ENCODE measurements at regions of chr19 and their contacts with region 1.

Region 1: DNA sequence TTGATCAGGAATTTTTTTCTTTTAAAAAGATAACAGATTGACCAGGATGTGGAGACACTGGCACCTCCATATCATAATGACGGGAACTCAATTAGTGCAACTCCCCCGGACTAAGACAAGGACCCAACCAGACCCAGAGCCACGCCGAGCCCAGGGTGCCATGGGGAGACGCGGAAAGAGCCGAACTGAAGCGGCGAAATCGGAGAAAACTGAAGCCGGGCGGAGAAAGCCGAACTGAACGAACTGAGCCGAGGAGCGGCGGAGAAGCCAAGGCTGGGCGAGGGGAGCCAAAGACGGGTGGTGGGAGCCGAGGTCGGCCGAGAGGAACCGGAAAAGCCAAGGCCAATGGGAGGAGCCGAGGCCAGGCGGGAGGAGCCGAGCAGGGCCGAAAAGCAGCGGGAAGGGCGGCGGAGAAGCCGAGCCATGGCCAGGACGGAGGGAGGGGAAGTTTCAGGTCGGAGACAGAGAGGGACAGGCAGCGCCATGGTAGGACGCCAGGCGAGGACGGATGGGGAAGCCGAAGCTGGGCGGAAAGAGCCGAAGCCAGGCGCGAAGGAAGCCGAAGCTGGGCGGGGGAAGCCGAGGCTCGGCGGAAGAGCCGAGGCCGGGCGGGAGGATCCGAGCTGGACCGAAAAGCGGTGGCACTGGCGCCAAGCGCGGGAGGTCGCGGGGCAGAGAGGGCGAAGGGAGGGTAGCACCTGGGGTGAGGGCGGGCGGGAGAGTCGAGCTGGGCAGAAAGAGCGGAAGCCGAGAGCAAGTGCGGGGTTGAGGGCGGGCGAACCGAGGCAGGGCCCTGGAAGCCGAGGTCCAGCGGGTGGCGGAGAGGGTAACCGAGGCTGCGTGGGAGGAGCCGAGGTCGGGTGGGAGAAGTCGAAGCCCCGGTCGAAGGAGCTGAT is 29.4 kb downstream of the ZNF557 start:
- DNase-seq: peak; percentile 92
- H3K4me3 ChIP-seq: peak overlapping the region; percentile 40 to 75 (median 61)
- H3K27ac ChIP-seq: peak overlapping the region; percentile 66
- H3K4me1 ChIP-seq: peaks cover 3% of the 10 kb centered on the region
- H3K27me3 ChIP-seq: no peaks in the 10 kb centered on the region
- CTCF ChIP-seq: no peak
- POLR2A ChIP-seq: peak; percentile 56

Region 2: GRCh38 chr19:7004313-7004931 is 94.5 kb before region 1 on chr19:
- CTCF ChIA-PET with region 1: no interaction called
- POLR2A ChIA-PET with region 1: no interaction called
- dilution Hi-C with region 1: no loop called
- intact Hi-C with region 1: no loop called
- DNase-seq: peak; percentile 36
- H3K4me3 ChIP-seq: no peak overlapping the region
- H3K27ac ChIP-seq: no peak overlapping the region
- H3K4me1 ChIP-seq: no peaks in the 10 kb centered on the region
- H3K27me3 ChIP-seq: no peaks in the 10 kb centered on the region
- CTCF ChIP-seq: peak; percentile 49 to 61
- POLR2A ChIP-seq: no peak

Region 3: GRCh38 chr19:7069042-7069903 is 29.7 kb before region 1 on chr19 and contains the start of gene ZNF557:
- CTCF ChIA-PET with region 1: interaction called, 7 read pairs
- POLR2A ChIA-PET with region 1: interaction called, 15 read pairs
- dilution Hi-C with region 1: no loop called
- intact Hi-C with region 1: loop called (anchors 1 kb)
- DNase-seq: peak; percentile 97
- H3K4me3 ChIP-seq: peak within 1 kb of the TSS; percentile 72 to 94 (median 79)
- H3K27ac ChIP-seq: peak within 1 kb of the TSS; percentile 46
- H3K4me1 ChIP-seq: peaks cover 7% of the 10 kb centered on the region
- H3K27me3 ChIP-seq: no peaks in the 10 kb centered on the region
- CTCF ChIP-seq: no peak
- POLR2A ChIP-seq: peak; percentile 63
- total RNA-seq, gene ZNF557: 8.0 and 9.1 TPM in 2 replicates

Region 4: DNA sequence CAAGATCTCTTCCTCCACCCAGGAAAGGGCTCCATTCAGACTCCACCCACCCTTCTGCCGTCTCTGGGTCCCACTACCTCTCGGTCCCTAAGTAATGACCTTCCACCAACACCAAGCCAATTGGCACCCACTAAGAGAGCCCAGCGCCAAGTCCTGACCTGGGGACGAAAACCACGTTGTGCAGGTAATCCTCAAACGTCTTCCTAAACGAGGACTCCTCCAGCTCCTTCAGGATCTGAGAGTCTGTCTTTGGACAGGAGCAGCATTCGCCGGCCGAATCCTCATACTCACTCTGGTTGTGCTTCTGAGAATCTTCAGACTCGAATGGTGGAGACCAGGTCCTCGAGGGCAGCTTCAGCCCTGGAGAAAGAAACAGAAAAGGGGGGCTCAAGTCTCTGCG is 53.6 kb after region 1 on chr19:
- CTCF ChIA-PET with region 1: interaction called, 15 read pairs
- POLR2A ChIA-PET with region 1: interaction called, 4 read pairs
- dilution Hi-C with region 1: no loop called
- intact Hi-C with region 1: loop called (anchors 1 kb)
- DNase-seq: no peak
- H3K4me3 ChIP-seq: no peak overlapping the region
- H3K27ac ChIP-seq: no peak overlapping the region
- H3K4me1 ChIP-seq: peaks cover 3% of the 10 kb centered on the region
- H3K27me3 ChIP-seq: no peaks in the 10 kb centered on the region
- CTCF ChIP-seq: no peak
- POLR2A ChIP-seq: no peak

Region 5: DNA sequence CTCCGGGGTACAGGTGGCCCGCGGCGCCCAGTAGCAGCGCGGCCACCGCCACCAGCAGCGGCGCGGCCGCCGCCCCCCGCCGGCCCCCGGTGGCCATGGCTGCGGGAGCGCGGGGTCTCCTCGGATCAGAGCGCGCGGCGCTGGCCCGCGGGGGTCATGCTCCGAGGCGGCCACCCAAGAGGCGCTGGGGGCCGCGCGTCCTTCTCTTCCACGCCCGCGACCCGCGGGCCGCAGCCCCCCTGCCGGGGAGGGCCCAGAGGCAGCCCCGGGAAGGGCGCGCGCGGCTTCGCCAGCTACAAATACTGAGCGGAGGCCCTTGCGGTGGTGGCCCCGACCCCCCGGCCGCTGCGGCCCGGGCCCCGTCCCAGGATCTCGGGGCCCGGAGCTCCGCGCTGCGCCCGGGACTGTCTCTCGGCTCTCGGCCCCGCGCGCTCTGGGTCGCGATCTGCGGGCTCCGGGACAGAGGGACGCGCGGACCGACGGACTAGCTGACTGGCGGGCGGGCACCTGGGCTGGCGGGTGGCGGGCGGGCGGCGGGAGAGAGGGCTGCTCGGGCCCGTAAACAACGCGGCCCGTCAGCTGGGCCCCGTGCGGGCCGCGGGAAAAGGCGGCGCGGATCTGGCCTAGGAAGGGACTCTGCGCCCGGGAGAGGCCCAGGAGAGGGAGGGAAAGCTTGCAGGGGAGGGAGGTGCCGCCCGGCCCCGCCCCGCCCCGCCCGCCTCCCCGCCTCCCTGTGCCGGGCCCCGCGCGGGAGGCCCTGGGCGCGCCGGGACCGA is 195.0 kb after region 1 on chr19 and contains the start of gene INSR:
- CTCF ChIA-PET with region 1: no interaction called
- POLR2A ChIA-PET with region 1: no interaction called
- dilution Hi-C with region 1: no loop called
- intact Hi-C with region 1: loop called (anchors 1 kb)
- DNase-seq: peak; percentile 90
- H3K4me3 ChIP-seq: peak within 1 kb of the TSS; percentile 42 to 55 (median 50)
- H3K27ac ChIP-seq: peak within 1 kb of the TSS; percentile 14
- H3K4me1 ChIP-seq: peaks cover 3% of the 10 kb centered on the region
- H3K27me3 ChIP-seq: no peaks in the 10 kb centered on the region
- CTCF ChIP-seq: no peak
- POLR2A ChIP-seq: no peak
- total RNA-seq, gene INSR: 19.5 and 20.8 TPM in 2 replicates

Region 6: DNA sequence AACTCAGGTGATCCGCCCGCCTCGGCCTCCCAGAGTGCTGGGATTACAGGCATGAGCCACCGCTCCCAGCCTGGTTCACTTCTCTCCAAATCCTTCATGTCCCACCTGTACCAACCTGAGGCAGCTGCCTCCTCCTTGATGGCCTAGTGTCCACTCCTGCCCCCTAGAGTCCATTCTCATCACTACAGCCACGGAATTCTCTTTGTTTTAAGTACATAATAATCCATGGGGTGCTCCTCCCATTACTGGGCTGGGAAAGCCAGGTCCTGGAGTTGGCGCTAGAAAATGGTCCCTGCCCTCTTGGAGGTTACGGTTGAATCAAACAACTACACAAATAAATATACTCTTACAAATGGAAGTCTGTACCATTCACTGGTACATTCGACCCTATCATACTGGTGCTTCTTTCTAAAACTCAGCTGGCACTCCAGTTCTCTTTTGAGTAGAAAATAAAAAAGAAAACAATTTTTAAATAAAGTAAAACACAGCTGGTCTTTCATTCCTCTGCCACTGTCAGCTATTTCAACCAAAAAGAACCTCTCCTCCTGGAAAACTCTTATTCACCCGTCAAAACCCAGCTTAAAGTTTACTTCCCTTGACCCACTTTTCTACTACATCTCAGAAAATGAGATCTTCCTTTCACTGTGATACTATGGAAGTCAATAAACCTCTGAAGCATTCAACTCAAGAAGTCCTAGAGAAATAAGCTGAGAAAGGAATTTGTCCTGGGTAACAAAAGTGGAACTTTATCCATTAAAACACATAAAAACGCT is 227.3 kb after region 1 on chr19:
- CTCF ChIA-PET with region 1: interaction called, 18 read pairs
- POLR2A ChIA-PET with region 1: no interaction called
- dilution Hi-C with region 1: no loop called
- intact Hi-C with region 1: no loop called
- DNase-seq: peak; percentile 22
- H3K4me3 ChIP-seq: no peak overlapping the region
- H3K27ac ChIP-seq: no peak overlapping the region
- H3K4me1 ChIP-seq: no peaks in the 10 kb centered on the region
- H3K27me3 ChIP-seq: no peaks in the 10 kb centered on the region
- CTCF ChIP-seq: peak; percentile 25 to 30
- POLR2A ChIP-seq: no peak

Region 7: DNA sequence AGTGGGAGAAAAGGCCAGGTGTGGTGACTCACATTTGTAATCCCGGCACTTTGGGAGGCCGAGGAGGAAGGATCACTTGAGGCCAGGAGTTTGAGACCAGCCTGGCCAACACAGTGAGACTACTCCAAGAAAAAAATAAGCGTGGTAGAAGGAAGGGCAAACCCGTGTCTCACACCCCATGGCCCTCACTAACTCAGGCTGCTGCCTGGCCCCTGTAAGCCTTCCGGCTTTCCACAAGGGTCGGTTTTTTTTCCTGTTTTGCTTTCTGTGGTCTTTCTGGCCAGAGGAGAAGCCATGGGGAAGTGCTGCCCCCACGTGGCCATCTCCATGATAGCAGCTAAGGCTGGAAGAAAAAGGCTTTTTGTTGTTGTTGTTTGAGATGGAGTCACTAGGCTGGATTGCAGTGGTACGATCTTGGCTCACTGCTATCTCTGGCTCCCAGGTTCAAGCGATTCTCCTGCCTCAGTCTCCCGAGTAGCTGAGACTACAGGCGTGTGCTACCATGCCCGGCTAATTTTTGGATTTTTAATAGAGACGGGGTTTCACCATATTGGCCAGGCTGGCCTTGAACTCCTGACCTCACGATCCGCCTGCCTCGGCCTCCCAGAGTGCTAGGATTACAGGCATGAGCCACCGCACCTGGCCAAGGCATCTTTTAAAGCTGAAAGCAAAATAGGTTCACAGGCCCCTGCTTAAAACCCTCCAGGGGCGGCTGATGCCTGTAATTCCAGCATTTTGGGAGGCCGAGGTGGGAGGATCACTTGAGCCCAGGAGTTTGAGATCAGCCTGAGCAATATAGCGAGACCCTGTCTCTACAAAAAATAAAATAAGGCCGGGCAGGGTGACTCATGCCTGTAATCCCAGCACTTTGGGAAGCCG is 242.2 kb after region 1 on chr19:
- CTCF ChIA-PET with region 1: interaction called, 81 read pairs
- POLR2A ChIA-PET with region 1: interaction called, 9 read pairs
- dilution Hi-C with region 1: no loop called
- intact Hi-C with region 1: loop called (anchors 1 kb)
- DNase-seq: peak; percentile 86
- H3K4me3 ChIP-seq: no peak overlapping the region
- H3K27ac ChIP-seq: no peak overlapping the region
- H3K4me1 ChIP-seq: no peaks in the 10 kb centered on the region
- H3K27me3 ChIP-seq: no peaks in the 10 kb centered on the region
- CTCF ChIP-seq: peak; percentile 78 to 92
- POLR2A ChIP-seq: no peak

Region 8: GRCh38 chr19:7376151-7376852 is 277.4 kb after region 1 on chr19:
- CTCF ChIA-PET with region 1: interaction called, 8 read pairs
- POLR2A ChIA-PET with region 1: no interaction called
- dilution Hi-C with region 1: no loop called
- intact Hi-C with region 1: loop called (anchors 1 kb)
- DNase-seq: no peak
- H3K4me3 ChIP-seq: no peak overlapping the region
- H3K27ac ChIP-seq: no peak overlapping the region
- H3K4me1 ChIP-seq: no peaks in the 10 kb centered on the region
- H3K27me3 ChIP-seq: no peaks in the 10 kb centered on the region
- CTCF ChIP-seq: no peak
- POLR2A ChIP-seq: no peak

Measured in endothelial cell of umbilical vein (primary cell).